Heart right ventricle (tissue), 16 donors: ENCODE measurements at regions of chr19 and their contacts with region 1.

Region 1: DNA sequence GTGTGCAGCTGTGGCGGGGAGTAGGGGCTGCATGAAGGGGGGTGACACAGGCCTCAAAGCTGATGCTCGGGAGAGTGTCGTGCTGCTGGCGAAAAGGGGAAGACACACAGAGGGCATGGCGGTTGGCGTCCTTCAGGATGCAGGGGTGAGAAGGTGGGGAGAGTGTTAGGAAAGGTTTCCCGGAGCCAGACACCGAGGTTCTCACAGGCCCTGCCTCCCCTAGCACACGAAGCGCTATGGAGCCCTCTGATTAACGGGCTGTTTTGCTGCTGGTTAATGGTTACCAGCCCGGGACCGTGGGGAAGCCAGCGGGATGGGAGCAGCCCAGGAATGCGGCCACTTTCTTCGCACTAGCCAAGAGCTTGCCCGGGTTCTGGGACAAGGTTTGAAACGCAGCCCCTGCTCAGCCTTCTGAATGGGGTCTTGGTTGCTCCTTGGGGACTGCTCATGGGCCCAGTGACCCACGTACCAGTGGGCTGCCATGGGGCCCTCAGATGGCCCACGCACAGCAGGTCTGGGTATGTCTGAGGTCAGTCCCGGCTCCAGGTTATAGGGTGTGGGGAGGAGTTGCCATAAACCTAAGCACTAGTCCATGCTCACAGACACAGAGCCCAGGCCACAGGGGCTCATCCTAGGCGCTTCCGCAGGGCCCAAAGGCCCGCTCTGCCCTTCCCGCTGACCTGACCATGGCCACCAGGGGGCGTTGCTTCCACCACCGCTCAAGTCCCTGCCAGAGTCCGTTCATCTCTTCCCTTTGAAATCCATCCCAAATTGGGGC is 31.3 kb upstream of the ISYNA1 start:
- DNase-seq: peak; percentile 64 to 76
- ATAC-seq: peak in 7 of 8 donors; percentile 21 to 57 (median 35)
- H3K4me3 ChIP-seq: no peak overlapping the region
- H3K27ac ChIP-seq: peak overlapping the region in 2 of 10 donors; percentile 28 to 57
- H3K4me1 ChIP-seq: peaks cover 37 to 80% (median 67%) of the 10 kb centered on the region in 9 donors
- H3K27me3 ChIP-seq: no peaks in the 10 kb centered on the region
- CTCF ChIP-seq: peak; percentile 46 to 83 (median 79)

Region 2: GRCh38 chr19:18428787-18429674 is 40.2 kb before region 1 on chr19:
- intact Hi-C with region 1: no loop called
- DNase-seq: peak; percentile 76 to 80
- ATAC-seq: peak; percentile 45 to 74 (median 50)
- H3K4me3 ChIP-seq: peak overlapping the region in 9 of 10 donors; percentile 34 to 53 (median 48)
- H3K27ac ChIP-seq: peak overlapping the region in 9 of 10 donors; percentile 13 to 80 (median 71)
- H3K4me1 ChIP-seq: peaks cover 28 to 79% (median 55%) of the 10 kb centered on the region in 9 donors
- H3K27me3 ChIP-seq: no peaks in the 10 kb centered on the region
- CTCF ChIP-seq: no peak

Region 3: DNA sequence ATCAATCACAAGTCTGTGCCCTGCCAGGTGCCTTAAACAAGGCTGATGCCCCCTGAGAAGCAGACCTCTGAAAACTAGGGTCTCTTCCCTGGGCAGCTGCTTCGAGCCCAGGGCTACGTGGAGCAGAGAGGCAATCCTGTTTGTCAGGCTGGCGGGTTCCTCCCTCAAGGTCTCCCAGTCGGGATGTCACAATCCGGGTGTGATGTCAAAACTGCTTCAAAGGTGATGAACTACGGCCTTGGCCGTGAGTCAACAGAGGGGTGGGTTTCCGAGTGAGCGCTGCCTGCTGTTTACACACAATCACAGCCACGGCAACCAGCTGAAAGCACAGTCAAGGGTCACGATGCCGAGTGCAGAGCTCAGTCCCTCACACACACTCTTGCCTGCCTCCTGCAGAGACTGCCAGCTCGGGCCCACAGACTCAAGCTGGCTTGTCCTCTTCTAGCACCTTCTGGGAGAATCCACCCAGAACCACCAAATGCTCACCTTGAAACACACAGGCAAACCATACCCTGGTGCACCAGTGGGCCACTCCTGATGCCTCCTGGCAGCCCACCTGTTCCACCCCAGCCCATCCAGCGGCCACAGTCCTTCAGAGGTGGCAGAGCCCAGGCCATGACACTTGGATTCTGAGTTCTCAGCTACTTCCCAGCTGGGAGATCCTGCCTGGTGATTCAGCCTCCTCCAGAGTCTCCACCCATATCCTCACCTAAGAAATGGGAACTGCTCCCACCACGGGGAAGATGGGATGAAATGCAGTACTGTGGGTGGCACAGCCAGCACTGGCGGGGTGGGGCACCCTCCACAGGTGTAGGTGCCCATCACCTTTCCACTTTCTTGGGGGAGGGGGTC is 45.8 kb after region 1 on chr19:
- intact Hi-C with region 1: loop called in 7 of 10 experiments (anchors 5 to 10 kb)
- DNase-seq: peak; percentile 48 to 65
- ATAC-seq: peak; percentile 24 to 67 (median 53)
- H3K4me3 ChIP-seq: no peak overlapping the region
- H3K27ac ChIP-seq: peak overlapping the region; percentile 5 to 87 (median 68)
- H3K4me1 ChIP-seq: peaks cover 17 to 89% (median 65%) of the 10 kb centered on the region in 9 donors
- H3K27me3 ChIP-seq: no peaks in the 10 kb centered on the region
- CTCF ChIP-seq: no peak

Region 4: GRCh38 chr19:18557474-18558201 is 88.4 kb after region 1 on chr19 and contains the start of gene KXD1:
- intact Hi-C with region 1: loop called in 1 of 10 experiments (anchors 10 kb)
- DNase-seq: peak; percentile 96 to 99
- ATAC-seq: peak; percentile 96 to 99 (median 98)
- H3K4me3 ChIP-seq: peak within 1 kb of the TSS; percentile 71 to 96 (median 87)
- H3K27ac ChIP-seq: peak within 1 kb of the TSS; percentile 66 to 98 (median 95)
- H3K4me1 ChIP-seq: peaks cover 4 to 45% (median 28%) of the 10 kb centered on the region in 9 donors
- H3K27me3 ChIP-seq: no peaks in the 10 kb centered on the region
- CTCF ChIP-seq: no peak
- total RNA-seq, gene KXD1: 35.6 to 63.9 (median 45.6) TPM

Region 5: DNA sequence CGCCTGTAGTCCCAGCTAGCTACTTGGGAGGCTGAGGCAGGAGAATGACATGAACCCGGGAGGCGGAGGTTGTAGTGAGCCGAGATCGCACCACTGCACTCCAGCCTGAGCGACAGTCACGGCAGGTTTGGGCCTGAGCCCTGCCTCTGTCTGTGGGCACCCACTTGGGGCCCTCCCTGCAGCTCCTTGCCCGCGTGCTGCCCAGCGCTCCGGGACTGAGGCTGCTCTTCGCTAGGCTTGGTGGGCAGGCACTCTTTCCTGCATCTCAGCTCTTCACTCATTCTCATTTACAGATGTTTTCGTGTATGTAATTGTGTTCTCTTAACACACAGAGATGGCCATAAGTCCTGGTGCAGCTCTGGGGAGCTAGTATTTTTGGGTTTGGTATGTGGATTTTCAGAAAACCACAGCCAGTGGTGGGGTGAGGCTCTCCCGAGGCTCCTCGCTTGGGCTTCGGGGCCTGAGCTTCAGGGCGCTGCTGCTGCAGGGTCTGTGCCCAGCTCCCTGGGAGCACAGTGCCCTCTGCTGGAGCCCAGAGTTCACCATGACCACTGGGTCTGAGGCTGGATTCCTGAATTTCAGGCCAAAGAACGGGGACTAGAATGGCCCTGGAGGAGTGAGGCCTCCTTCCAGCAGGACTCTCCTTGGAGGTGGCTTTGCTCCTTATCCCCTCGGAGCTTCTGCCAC is 377.7 kb after region 1 on chr19:
- intact Hi-C with region 1: loop called in 5 of 10 experiments (anchors 5 to 10 kb)
- DNase-seq: peak; percentile 77 to 83
- ATAC-seq: peak; percentile 70 to 79 (median 75)
- H3K4me3 ChIP-seq: no peak overlapping the region
- H3K27ac ChIP-seq: peak overlapping the region in 8 of 10 donors; percentile 58 to 92 (median 86)
- H3K4me1 ChIP-seq: peaks cover 29 to 94% (median 76%) of the 10 kb centered on the region in 9 donors
- H3K27me3 ChIP-seq: no peaks in the 10 kb centered on the region
- CTCF ChIP-seq: peak; percentile 65 to 93 (median 89)

Region 6: DNA sequence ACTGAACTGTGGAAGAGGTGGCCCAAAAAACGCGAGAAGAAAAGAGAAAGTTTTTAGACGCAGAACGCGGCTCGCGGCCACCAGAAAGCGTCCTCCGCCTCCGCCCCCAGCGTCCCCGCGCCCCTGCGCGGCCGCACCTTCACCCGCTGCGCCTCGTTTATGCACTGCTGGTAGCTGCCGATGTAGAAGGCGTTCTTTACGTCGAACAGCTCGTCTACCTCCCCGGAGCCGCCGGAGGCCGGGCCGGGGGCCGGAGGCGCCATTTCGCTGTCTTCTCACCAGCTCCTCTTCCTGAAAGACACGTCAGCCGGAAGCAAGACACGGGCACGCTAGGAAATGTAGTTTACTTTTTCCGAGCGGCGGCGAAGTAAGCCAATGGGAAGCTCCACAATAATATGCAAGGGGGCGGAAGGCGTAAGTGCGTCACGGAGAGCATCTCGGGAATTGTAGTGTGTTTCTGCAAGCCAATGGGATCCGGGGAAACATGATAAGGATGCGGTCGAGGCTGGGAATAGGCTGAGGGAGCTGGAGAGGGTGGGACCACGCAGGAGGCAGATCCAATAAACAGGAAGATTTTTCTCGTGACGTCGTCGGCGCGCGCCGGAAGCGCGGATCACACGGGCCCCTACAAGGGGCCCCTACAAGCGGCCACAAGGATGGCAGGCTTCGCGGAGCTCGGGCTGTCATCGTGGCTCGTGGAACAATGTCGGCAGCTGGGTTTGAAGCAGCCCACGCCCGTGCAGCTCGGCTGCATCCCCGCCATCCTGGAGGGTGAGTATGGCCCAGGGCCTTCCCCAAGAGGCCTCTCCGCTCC is 450.0 kb after region 1 on chr19 and contains the starts of genes COPE and DDX49:
- intact Hi-C with region 1: loop called in 1 of 10 experiments (anchors 10 kb)
- DNase-seq: peak; percentile 95 to 99
- ATAC-seq: peak; percentile 96 to 99 (median 99)
- H3K4me3 ChIP-seq: peak within 1 kb of the TSS; percentile 65 to 98 (median 88)
- H3K27ac ChIP-seq: peak within 1 kb of the TSS; percentile 76 to 94 (median 90)
- H3K4me1 ChIP-seq: peaks cover 11 to 40% (median 31%) of the 10 kb centered on the region in 9 donors
- H3K27me3 ChIP-seq: no peaks in the 10 kb centered on the region
- CTCF ChIP-seq: peak in 1 of 9 donors; percentile 7
- total RNA-seq, gene COPE: 102 to 157 (median 117) TPM
- total RNA-seq, gene DDX49: 16.2 to 29.8 (median 21.3) TPM